CD8-positive, alpha-beta T cell (primary cell): ENCODE measurements at regions of chr1 and their contacts with region 1.

Region 1: DNA sequence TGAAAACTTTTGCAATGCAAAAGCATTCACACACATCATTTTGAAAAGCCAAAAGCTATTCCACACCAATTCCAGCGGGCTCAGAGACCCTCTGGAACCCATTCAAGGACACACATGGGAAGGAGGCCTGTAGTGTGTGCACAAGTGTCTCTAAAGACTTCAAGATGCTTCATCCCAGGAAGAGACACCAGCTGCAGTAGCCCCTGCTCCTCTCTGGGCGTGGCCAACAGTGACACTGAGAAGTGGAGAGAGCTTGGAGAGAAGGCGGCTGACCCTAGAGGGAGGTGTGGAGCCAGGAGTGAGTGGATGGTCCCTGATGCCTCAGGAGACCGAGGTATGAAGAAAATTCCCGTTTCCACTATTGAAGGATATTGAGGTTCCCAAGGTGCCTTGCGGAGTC is 14.9 kb upstream of the TNNI1 start:
- DNase-seq: no peak
- ATAC-seq: no peak
- H3K4me3 ChIP-seq: no peak overlapping the region
- H3K4me3 Mint-ChIP-seq: no peak overlapping the region
- H3K27ac ChIP-seq: no peak overlapping the region
- H3K27ac Mint-ChIP-seq: no peak overlapping the region
- H3K4me1 ChIP-seq: no peaks in the 10 kb centered on the region
- H3K4me1 Mint-ChIP-seq: peaks cover 5% of the 10 kb centered on the region
- H3K27me3 ChIP-seq: no peaks in the 10 kb centered on the region
- H3K27me3 Mint-ChIP-seq: peaks cover 17% of the 10 kb centered on the region
- CTCF ChIP-seq: no peak

Region 2: GRCh38 chr1:201447911-201448871 is 11.8 kb after region 1 on chr1:
- CTCF ChIA-PET with region 1: interaction called, 19 read pairs
- POLR2A ChIA-PET with region 1: interaction called, 3 read pairs
- intact Hi-C with region 1: no loop called
- DNase-seq: peak; percentile 16 to 70 (median 53)
- ATAC-seq: peak; percentile 79
- H3K4me3 ChIP-seq: no peak overlapping the region
- H3K4me3 Mint-ChIP-seq: no peak overlapping the region
- H3K27ac ChIP-seq: no peak overlapping the region
- H3K27ac Mint-ChIP-seq: no peak overlapping the region
- H3K4me1 ChIP-seq: no peaks in the 10 kb centered on the region
- H3K4me1 Mint-ChIP-seq: no peaks in the 10 kb centered on the region
- H3K27me3 ChIP-seq: no peaks in the 10 kb centered on the region
- H3K27me3 Mint-ChIP-seq: peaks cover 7% of the 10 kb centered on the region
- CTCF ChIP-seq: peak; percentile 53

Region 3: GRCh38 chr1:201673915-201674314 is 237.5 kb after region 1 on chr1:
- CTCF ChIA-PET with region 1: no interaction called
- POLR2A ChIA-PET with region 1: no interaction called
- intact Hi-C with region 1: no loop called
- DNase-seq: no peak
- ATAC-seq: no peak
- H3K4me3 ChIP-seq: no peak overlapping the region
- H3K4me3 Mint-ChIP-seq: no peak overlapping the region
- H3K27ac ChIP-seq: no peak overlapping the region
- H3K27ac Mint-ChIP-seq: no peak overlapping the region
- H3K4me1 ChIP-seq: no peaks in the 10 kb centered on the region
- H3K4me1 Mint-ChIP-seq: no peaks in the 10 kb centered on the region
- H3K27me3 ChIP-seq: no peaks in the 10 kb centered on the region
- H3K27me3 Mint-ChIP-seq: no peaks in the 10 kb centered on the region
- CTCF ChIP-seq: no peak